HEK293 (cell line): ENCODE measurements at regions of chr11 and their contacts with region 1.

Region 1: DNA sequence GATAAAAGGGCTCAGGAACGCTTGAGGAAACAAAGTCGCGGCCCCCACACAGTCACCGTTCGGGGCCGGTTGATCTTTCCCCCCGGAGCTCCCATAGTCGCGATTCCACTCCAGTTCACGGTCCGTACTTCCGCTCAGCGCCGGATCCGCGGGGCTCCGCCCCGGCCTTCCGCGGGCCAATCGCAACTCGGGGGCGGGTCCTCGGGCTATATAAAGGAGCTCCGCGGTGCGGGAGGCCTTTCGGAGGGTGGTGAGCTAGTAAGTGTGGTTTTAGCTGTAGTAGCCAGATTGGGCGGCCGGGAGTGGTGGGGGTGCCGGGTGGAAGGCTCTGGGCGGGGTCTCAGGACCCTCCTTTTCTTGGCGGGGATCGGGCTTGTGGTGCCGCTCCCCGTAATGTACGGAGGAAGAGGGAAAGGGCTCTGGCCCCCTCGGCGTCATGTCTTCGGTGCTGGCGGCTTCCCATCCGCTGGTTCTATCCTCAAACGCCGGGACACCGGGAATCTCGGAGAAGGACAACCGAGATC is at the starts of genes C11orf98 and CSKMT:
- H3K4me3 ChIP-seq: peak within 1 kb of the TSS; percentile 89
- H3K27ac ChIP-seq: peak within 1 kb of the TSS; percentile 66
- H3K4me1 ChIP-seq: no peaks in the 10 kb centered on the region
- CTCF ChIP-seq: no peak

Region 2: DNA sequence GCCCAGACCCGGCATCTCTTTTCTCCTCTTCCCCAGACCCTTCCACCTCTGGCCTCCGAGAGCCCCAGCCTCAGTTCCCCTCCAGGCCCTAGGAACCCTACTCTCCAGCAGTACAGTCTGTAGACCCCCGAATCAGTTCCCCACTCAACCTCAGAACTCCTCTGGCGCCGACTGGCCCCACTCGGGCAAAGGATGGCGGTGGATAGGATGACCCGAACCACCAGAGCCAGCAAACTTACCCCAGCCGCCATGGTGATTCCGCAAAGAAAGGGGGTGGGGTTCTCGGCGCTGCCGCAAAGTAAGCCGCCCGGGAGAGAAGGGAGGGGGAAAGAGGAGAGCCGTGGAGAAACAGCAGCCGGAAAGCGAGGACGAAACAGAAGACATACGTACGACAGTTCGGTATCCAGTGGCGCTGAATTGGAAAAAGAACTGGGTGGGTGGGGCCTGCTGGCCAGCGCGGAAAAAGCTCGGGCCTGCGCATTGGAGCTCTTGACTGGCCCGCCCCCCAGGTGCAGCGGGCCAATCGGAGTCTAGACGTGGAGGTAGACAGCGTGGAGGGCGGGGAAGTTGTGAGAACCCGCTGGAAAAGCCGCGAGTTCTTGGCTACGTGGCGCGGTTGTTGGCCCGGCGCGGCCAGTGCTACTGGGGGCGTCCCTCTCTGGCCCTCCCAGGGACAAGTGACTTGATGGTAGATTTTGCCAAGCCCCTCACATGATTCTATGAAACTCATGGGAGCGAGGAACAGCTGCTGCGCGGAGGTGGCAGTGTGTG is 91.4 kb before region 1 on chr11 and contains the start of gene EEF1G:
- CTCF ChIA-PET with region 1: no interaction called
- POLR2A ChIA-PET with region 1: interaction called, 17 read pairs
- H3K4me3 ChIP-seq: peak within 1 kb of the TSS; percentile 90
- H3K27ac ChIP-seq: peak within 1 kb of the TSS; percentile 99
- H3K4me1 ChIP-seq: no peaks in the 10 kb centered on the region
- CTCF ChIP-seq: no peak

Region 3: DNA sequence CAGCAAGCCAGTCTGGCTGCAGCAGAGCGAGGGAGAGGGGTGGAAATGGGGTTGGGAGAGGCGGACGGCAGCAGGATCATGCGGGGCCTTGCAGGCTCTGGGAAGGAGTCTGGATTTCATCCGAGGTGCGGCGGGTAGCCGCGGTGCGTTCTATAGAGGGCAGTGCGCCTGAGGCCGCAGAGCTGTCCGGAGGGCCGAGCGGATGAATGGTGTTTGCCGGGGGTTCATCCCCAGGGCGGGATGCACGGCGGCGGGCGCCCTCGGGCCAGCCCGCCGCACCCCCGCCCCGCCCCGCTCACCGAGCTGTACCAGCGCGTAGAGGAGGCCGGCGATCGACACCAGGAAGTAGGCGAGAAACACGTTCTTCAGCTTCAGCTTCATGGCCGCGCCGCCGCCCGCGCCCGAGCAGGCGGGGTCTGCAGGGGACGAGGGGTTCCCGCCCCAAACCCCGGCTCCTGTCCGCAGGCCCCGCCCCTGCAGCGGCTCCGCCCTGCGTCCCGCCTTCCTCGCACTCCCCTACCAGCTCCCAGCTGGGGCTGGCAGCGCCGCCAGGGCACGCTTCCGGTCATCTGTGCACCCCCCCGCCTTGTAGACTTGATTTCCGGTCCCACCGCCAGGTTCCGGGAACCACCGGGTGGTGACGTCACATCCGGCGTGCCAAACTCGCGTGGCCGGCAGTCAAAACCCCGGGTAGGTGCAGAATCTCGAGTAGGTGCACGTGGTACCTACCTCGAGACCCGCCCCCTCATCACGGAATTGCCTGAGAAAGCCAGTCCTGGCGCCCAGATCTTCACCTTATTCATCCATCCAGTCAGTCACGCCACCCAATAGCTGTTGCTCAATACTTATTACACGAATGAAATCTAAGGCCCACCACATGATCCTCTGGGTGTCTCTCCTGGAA is 43.3 kb before region 1 on chr11 and contains the start of gene B3GAT3:
- CTCF ChIA-PET with region 1: no interaction called
- POLR2A ChIA-PET with region 1: interaction called, 27 read pairs
- H3K4me3 ChIP-seq: peak within 1 kb of the TSS; percentile 71
- H3K27ac ChIP-seq: peak within 1 kb of the TSS; percentile 80
- H3K4me1 ChIP-seq: no peaks in the 10 kb centered on the region
- CTCF ChIP-seq: peak; percentile 5; the same call in 1 of the 2 replicates

Region 4: DNA sequence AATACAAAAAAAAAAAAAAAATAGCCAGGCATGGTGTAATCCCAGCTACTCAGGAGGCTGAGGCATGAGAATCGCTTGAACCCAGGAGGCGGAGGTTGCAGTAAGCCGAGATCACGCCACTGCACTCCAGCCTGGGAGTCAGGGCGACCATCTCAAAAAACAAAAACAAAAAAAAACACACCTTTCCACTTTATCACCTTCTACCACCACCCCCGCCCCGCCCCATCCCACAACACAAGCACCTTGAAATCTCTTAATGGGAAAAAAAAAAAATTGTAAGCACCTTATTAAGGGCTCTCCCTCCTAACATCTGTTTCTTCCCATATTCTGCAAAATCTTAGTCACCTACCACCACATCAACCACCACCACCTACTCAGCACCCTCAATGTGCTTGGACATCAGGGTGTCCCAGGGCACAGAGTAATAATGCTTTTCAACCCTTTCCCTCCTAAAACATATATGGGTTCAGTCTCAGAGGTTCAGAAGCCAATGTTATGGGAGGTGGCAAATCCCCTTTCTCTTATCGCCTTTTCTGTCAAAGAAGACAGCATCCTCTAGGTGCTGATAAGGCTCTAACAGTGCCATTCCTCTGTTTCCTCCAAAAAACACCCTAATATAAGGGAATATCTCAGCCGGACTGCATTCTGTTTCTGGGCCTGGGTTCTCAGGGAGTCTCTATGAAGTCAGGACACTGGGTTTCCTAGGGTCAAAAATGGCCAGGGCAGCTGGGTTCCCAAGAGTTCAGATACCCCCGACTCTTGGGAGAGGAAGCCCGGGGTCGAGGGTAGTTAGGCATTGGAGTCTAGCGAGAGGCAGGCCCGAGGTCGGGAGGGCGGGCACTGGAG is 12.8 kb before region 1 on chr11:
- CTCF ChIA-PET with region 1: interaction called, 4 read pairs
- POLR2A ChIA-PET with region 1: interaction called, 90 read pairs
- H3K4me3 ChIP-seq: peak overlapping the region; percentile 99
- H3K27ac ChIP-seq: peak overlapping the region; percentile 70
- H3K4me1 ChIP-seq: no peaks in the 10 kb centered on the region
- CTCF ChIP-seq: no peak

Region 5: GRCh38 chr11:62689421-62690183 is 24.5 kb after region 1 on chr11 and contains the start of gene LRRN4CL:
- CTCF ChIA-PET with region 1: interaction called, 7 read pairs
- POLR2A ChIA-PET with region 1: interaction called, 15 read pairs
- H3K4me3 ChIP-seq: no peak within 1 kb of the TSS
- H3K27ac ChIP-seq: no peak within 1 kb of the TSS
- H3K4me1 ChIP-seq: no peaks in the 10 kb centered on the region
- CTCF ChIP-seq: no peak

Region 6: GRCh38 chr11:62726915-62727763 is 62.0 kb after region 1 on chr11 and contains the start of gene HNRNPUL2:
- CTCF ChIA-PET with region 1: interaction called, 4 read pairs
- POLR2A ChIA-PET with region 1: interaction called, 22 read pairs
- H3K4me3 ChIP-seq: peak within 1 kb of the TSS; percentile 93
- H3K27ac ChIP-seq: peak within 1 kb of the TSS; percentile 98
- H3K4me1 ChIP-seq: peaks cover 4% of the 10 kb centered on the region; the same call in 1 of the 2 replicates
- CTCF ChIP-seq: no peak

Region 7: GRCh38 chr11:62855571-62856332 is 190.6 kb after region 1 on chr11:
- CTCF ChIA-PET with region 1: no interaction called
- POLR2A ChIA-PET with region 1: interaction called, 12 read pairs
- H3K4me3 ChIP-seq: peak overlapping the region; percentile 88
- H3K27ac ChIP-seq: peak overlapping the region; percentile 82
- H3K4me1 ChIP-seq: no peaks in the 10 kb centered on the region
- CTCF ChIP-seq: no peak